Mucosa of descending colon (tissue), 3 donors: ENCODE measurements at regions of chr10 and their contacts with region 1.

Region 1: DNA sequence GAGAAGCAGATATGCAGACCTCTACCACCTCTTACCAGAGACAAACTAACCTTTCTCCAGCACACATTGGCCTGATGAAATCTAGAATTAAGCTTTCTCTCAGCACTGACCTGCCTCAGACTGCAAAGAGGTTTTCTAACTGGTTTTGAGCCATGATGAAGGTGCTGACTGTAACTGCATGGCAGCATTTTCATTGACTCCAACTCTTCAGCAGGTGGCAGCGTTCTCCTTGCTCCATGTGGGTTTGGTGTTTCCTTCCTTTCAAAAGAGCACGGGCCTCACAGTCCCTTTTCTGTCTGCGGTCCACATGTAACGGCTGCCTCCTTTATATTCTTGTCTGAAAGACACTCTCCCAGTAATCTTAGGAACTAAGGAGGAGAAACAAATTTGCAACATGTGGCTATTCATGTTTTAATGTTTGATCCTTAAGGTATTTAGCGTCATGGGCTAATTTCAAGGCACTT is 12.6 kb downstream of the KLLN start:
- DNase-seq: peak in 2 of 3 donors; percentile 54 to 71
- ATAC-seq: peak; percentile 93
- H3K4me3 ChIP-seq: no peak overlapping the region
- H3K4me1 ChIP-seq: peaks cover 4% of the 10 kb centered on the region
- CTCF ChIP-seq: peak; percentile 40

Region 2: DNA sequence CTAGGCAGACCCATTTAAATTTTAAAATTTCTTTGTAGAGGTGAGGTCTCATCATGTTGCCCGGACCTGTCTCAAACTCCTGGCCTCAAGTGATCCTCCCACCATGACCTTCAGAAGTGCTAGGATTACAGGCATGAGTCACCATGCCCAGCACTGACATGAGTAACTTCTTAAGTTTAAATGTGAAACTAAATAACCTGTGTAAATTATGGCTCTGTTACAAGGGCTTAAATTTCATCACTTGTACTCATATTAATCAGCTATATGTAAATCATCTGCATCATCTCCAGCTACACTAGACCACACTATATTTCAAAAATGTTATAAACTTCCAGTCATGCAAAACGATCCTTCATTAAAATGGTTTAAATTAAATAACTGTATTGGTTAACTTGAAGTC is 88.9 kb before region 1 on chr10:
- intact Hi-C with region 1: no loop called
- DNase-seq: no peak
- ATAC-seq: peak; percentile 68
- H3K4me3 ChIP-seq: no peak overlapping the region
- H3K4me1 ChIP-seq: no peaks in the 10 kb centered on the region
- CTCF ChIP-seq: no peak

Region 3: GRCh38 chr10:87960230-87960629 is 109.5 kb after region 1 on chr10:
- intact Hi-C with region 1: no loop called
- DNase-seq: no peak
- ATAC-seq: no peak
- H3K4me3 ChIP-seq: no peak overlapping the region
- H3K4me1 ChIP-seq: peaks cover 3% of the 10 kb centered on the region
- CTCF ChIP-seq: no peak

Region 4: DNA sequence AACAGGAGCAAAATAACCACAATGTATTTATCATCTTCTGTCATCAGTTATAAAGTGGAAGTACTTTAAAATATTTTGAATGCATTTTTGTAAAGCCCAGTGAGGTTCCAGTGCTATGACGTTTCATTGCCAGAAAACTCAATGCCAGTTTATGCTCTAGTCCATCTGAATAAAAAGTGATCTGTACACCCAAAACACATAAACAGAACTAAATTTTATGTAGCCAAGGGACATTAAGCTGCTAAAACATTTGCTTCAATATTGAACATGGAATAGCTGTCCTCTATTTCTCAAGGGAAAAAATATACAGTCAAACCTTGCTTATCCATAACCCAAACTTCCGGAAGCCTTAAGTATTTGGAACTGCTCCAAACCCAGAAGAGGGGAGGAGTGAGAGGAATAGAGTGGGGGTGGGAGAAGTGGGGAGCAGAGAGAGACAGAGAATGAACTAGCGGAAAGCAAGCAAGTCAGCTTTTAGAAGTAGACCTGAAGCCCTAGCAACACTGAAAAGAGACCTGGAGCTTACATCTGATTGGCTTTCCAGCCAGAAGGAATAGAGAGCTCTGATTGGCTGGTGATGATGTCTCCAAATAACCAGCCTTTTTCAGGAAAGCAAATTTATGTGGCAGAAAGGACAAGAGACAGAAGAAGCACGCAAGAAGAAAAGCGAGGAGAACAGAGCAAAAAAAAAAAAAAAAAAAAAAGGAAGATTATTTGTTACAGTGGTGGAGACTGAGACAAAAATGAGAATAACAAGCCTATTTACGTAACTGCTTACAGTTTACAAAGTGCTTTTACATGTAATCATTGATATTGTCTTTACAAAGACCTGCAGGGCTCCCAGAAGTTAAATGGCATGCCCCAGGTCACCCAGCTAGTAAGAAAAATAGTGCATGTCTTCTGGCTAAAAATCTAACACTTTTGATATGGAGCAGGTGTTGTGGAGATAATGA is 536.3 kb after region 1 on chr10:
- intact Hi-C with region 1: loop called in 1 of 2 experiments (anchors 10 kb)
- DNase-seq: peak in 1 of 3 donors; percentile 61
- ATAC-seq: peak; percentile 64
- H3K4me3 ChIP-seq: no peak overlapping the region
- H3K4me1 ChIP-seq: peaks cover 28% of the 10 kb centered on the region
- CTCF ChIP-seq: no peak